ENCODE measurements at regions of chr13 and their contacts with region 1.

Region 1: GRCh38 chr13:96020155-96020575 is 33.0 kb downstream of the UGGT2 start:
- DNase-seq: no peak
- ATAC-seq: peak; percentile 87

Region 2: GRCh38 chr13:95882121-95882520 is 138.0 kb before region 1 on chr13:
- intact Hi-C with region 1: no loop called
- DNase-seq: no peak
- ATAC-seq: no peak

Region 3: DNA sequence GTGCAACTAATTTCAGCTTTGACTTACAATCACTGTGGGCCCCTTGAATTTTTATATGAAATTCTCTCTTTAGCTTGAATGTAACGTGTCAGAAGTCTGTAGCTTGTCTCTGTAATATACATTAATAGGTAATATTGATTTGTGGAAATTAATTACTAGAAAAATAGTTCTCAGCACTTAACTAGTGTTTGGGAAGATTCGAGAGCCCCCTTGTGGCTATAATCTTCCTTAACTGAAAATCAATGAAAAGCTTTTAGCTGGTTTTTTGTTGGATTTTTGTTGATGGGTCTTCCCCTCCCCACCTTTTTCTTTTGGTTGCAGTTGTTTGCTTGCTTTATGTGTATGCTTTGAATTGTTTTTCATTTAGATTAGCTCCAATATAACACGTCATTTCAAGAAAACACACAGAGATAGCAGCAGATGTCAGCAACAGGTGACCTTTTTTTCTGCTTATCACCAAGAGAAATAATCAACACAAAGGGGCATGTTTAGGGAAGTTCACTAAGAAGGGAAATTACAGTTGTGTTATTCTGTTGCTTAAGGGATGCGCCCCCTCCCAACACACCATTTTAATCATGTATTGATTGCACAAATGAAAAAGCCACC is 797.3 kb after region 1 on chr13:
- intact Hi-C with region 1: loop called (anchors 10 kb)
- DNase-seq: no peak
- ATAC-seq: peak; percentile 40

Region 4: GRCh38 chr13:96963786-96964475 is 943.8 kb after region 1 on chr13:
- intact Hi-C with region 1: loop called (anchors 5 kb)
- DNase-seq: no peak
- ATAC-seq: no peak

Measured in Right ventricle myocardium superior (tissue), 1 donor.